ENCODE measurements at regions of chr11 and their contacts with region 1.

Region 1: GRCh38 chr11:72144807-72145560 is 9.5 kb downstream of the FOLR3 start:
- DNase-seq: no peak
- H3K4me3 Mint-ChIP-seq: no peak overlapping the region
- H3K27ac Mint-ChIP-seq: no peak overlapping the region
- H3K4me1 Mint-ChIP-seq: no peaks in the 10 kb centered on the region
- H3K27me3 Mint-ChIP-seq: peaks cover 33% of the 10 kb centered on the region

Region 2: GRCh38 chr11:72123117-72123653 is 21.8 kb before region 1 on chr11:
- CTCF ChIA-PET with region 1: interaction called, 15 read pairs
- DNase-seq: no peak
- H3K4me3 Mint-ChIP-seq: no peak overlapping the region
- H3K27ac Mint-ChIP-seq: no peak overlapping the region
- H3K4me1 Mint-ChIP-seq: no peaks in the 10 kb centered on the region
- H3K27me3 Mint-ChIP-seq: peaks cover 19% of the 10 kb centered on the region

Region 3: DNA sequence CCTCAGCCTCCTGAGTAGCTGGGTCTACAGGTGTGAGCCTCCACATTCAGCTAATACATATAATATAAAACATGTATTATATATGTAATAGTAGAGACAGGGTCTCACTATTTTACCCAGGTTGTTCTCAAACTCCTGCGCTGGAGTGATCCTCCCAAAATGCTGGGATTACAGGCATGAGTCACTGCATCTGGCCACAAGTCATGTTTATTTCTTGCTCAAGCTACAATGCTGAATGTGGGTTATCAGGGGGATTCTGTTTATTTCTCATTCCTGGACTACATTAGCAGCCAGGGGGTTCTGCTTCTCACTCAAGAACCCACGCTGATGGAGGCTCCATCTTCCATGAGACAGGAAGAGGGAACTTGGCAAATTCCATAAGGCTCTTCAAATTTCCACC is 15.3 kb after region 1 on chr11:
- CTCF ChIA-PET with region 1: interaction called, 11 read pairs
- DNase-seq: no peak
- H3K4me3 Mint-ChIP-seq: no peak overlapping the region
- H3K27ac Mint-ChIP-seq: no peak overlapping the region
- H3K4me1 Mint-ChIP-seq: no peaks in the 10 kb centered on the region
- H3K27me3 Mint-ChIP-seq: peaks cover 32% of the 10 kb centered on the region

Region 4: DNA sequence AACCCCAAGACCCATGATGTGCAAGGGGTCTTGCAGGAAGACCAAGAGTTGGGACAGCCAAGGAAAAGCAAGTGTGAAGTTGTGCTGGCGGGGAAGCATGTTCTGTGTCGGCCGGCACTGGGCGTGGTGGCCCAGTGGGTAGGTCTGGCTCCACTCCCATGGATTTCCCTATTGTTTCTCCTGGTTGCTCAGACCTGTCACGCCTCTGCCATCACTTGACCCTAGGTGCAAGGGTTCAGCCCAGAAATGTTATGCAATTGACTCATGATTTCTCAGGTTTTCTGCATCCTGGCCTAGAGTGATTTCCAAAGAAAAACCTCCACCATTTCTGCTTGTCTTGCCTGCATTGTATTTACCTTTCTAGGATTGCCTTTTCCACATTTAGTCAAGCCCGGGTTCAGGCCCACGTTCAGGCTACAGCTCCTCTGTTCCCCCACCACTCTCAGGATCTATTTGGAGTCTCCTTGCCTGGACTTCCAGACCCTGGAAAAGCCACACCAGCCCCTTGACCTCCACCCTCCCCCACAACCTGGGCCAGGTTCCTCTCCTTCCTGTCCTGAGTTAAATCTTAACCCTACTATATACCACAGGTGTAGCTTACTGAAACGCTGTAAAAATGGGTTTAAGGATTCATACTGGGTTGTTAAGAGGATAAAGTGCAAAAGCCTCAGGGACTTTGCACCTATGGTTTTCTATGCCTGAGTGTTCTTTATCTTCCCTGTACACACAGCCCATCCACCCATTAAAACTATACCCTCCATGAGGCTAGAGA is 29.5 kb after region 1 on chr11:
- CTCF ChIA-PET with region 1: no interaction called
- DNase-seq: no peak
- H3K4me3 Mint-ChIP-seq: no peak overlapping the region
- H3K27ac Mint-ChIP-seq: no peak overlapping the region
- H3K4me1 Mint-ChIP-seq: peaks cover 4% of the 10 kb centered on the region
- H3K27me3 Mint-ChIP-seq: peaks cover 30% of the 10 kb centered on the region

Measured in activated naive CD4-positive, alpha-beta T cell treated with anti-CD3 and anti-CD28 coated beads, Interleukin-2, amount 10 ng/mL, durations not matched to agents 7 days and 5 days (primary cell).